PC-9 (cell line): ENCODE measurements at regions of chr2 and their contacts with region 1.

Region 1: DNA sequence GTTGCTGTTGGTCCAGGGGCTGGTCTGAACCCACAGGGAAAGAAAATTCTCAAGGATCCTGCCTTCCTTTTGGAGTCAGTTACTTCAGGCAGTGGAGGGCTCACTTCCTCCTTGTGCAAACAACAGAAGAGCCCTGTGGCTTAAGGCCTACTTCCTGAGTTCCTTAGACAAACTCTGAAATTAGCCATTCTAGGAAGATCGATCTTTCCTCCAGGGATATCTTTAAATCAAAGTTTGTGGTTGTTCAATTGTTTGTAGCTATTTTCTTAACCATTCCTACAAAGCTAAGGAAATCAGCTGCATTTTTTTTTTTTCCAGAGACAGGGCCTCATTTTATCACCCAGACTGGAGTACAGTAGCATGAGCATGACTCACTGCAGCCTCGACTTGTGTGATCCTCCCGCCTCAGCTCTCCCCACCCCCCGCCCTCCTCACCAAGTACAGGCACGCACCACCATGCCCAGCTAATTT is 156.0 kb downstream of the TANC1 start:
- DNase-seq: peak; percentile 22 to 86
- H3K4me3 ChIP-seq: no peak overlapping the region
- H3K27ac ChIP-seq: peak overlapping the region; percentile 77
- H3K4me1 ChIP-seq: peaks cover 31% of the 10 kb centered on the region
- H3K27me3 ChIP-seq: no peaks in the 10 kb centered on the region
- CTCF ChIP-seq: no peak

Region 2: DNA sequence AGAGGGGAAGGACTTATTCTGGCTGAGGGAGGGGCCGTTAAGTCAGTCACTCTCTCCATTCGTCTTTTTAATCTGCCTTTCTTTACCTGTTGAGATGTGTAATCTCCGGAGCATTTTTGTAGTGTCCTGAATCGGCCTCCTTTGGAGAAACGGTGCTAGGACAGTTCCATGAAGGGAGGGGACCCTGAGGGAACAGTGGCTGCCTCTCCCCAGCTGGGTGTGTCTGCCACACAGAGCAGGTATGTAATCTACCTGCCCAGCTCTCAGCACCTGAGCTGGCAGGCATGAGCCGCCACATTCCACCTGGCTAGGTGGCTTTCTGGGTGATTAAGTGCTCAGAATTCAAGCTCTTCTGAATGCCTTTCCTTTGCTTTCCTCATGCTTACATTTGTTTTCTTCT is 30.8 kb after region 1 on chr2:
- CTCF ChIA-PET with region 1: no interaction called
- POLR2A ChIA-PET with region 1: no interaction called
- intact Hi-C with region 1: loop called (anchors 1 kb)
- DNase-seq: peak; percentile 79 to 92
- H3K4me3 ChIP-seq: peak overlapping the region; percentile 20; the same call in 1 of the 2 replicates
- H3K27ac ChIP-seq: peak overlapping the region; percentile 86
- H3K4me1 ChIP-seq: peaks cover 61% of the 10 kb centered on the region
- H3K27me3 ChIP-seq: no peaks in the 10 kb centered on the region
- CTCF ChIP-seq: no peak

Region 3: DNA sequence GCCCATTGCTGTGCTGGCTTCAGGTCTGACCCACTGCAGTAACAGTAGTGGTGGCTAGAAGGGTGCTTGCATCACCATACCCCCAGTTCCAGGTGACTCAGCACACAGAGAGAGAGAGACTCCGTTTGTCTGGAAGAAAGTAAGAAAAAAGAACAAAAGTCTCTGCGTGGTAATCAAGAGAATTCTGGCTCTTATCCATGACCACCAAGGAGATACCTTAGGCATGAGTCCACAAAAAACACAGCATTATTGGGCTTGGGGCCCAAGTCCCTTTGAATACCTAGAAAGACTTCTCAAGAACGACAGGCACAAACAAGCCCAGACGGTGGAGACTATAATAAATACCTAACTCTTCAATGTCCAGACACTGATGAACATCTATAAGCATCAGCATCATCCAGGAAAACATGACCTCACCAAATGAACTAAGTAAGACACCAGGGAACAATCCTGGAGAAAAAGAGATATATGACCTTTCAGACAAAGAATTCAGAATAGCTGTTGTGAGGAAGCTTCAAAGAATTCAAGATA is 513.6 kb after region 1 on chr2:
- CTCF ChIA-PET with region 1: no interaction called
- POLR2A ChIA-PET with region 1: no interaction called
- intact Hi-C with region 1: no loop called
- DNase-seq: peak in 1 of 2 experiments; percentile 9
- H3K4me3 ChIP-seq: no peak overlapping the region
- H3K27ac ChIP-seq: no peak overlapping the region
- H3K4me1 ChIP-seq: no peaks in the 10 kb centered on the region
- H3K27me3 ChIP-seq: no peaks in the 10 kb centered on the region
- CTCF ChIP-seq: no peak